Left cardiac atrium (tissue), 4 donors: ENCODE measurements at regions of chrX and their contacts with region 1.

Region 1: DNA sequence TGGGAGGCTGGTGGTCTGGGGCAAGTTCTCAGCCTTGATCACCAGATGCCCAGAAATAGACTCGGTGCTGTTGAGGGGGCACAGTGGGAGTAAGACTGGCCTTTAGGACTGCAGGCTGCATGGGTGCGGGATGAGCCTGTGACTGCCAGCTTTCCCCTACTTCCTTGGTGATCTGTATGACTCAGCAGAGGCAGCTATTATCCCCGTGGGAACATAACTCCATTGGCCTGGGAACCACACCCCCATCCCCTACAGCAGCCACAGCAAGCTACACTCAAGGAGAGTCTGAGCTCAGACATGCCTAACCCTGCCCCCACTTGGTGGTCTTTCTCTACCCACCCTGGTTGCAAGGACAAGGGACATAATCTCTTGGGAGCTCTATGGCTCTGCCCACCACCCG is 20.6 kb downstream of the CLIC2 start:
- DNase-seq: no peak
- ATAC-seq: no peak

Region 2: DNA sequence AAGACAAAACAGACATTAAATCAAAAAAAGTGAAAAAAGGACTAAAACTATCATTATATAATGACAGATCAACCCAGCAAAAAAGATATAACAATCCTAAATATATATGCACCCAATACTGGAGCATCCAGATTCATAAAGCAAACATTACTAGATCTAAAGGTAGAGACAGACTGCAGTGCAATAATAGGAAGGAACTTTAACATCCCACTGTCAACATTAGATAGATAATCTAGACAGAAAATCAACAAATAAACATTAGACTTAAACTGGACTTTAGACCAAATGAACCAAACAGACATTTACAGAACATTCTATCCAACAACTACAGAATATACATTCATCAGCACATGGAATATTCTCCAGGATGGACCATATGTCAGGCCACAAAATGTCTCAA is 20.0 kb before region 1 on chrX:
- intact Hi-C with region 1: loop called in 1 of 2 experiments (anchors 2 kb)
- DNase-seq: no peak
- ATAC-seq: no peak